Endothelial cell of umbilical vein (primary cell): ENCODE measurements at regions of chr13 and their contacts with region 1.

Region 1: GRCh38 chr13:34430294-34430693 is 511.8 kb upstream of the NBEA start:
- DNase-seq: no peak
- H3K4me3 ChIP-seq: no peak overlapping the region
- H3K27ac ChIP-seq: no peak overlapping the region
- H3K4me1 ChIP-seq: no peaks in the 10 kb centered on the region
- H3K27me3 ChIP-seq: no peaks in the 10 kb centered on the region
- CTCF ChIP-seq: no peak
- POLR2A ChIP-seq: no peak

Region 2: DNA sequence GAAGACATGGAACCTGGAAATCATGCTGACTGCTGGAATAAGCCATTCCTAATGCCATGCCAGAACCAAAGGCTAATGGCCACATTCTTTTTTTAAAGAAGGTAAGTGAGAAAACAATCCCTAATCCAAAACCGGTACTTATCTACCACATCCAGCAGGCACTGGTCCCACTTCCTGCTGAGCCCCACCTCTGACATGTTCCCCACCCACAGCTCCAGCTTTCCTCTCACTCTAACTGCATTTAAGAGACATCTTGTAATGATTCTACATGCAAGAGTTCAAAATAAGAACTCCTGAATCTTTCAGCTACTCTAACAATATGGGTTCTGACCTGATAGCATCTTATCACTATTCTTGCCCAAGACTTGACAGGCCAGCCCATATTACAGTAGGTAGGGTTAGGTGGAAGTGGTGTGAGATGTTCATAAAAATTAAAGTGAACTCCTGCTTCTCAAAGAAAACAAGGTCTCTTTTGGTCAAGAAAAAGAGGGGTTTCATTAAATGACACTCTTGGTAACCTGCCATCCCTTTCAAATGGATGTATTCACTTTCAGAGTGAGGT is 1933.6 kb before region 1 on chr13:
- CTCF ChIA-PET with region 1: no interaction called
- POLR2A ChIA-PET with region 1: no interaction called
- dilution Hi-C with region 1: no loop called
- intact Hi-C with region 1: no loop called
- DNase-seq: no peak
- H3K4me3 ChIP-seq: no peak overlapping the region
- H3K27ac ChIP-seq: no peak overlapping the region
- H3K4me1 ChIP-seq: no peaks in the 10 kb centered on the region
- H3K27me3 ChIP-seq: no peaks in the 10 kb centered on the region
- CTCF ChIP-seq: no peak
- POLR2A ChIP-seq: no peak

Region 3: GRCh38 chr13:34671137-34671536 is 240.8 kb after region 1 on chr13:
- CTCF ChIA-PET with region 1: no interaction called
- POLR2A ChIA-PET with region 1: interaction called, 16 read pairs
- dilution Hi-C with region 1: no loop called
- intact Hi-C with region 1: no loop called
- DNase-seq: no peak
- H3K4me3 ChIP-seq: no peak overlapping the region
- H3K27ac ChIP-seq: no peak overlapping the region
- H3K4me1 ChIP-seq: no peaks in the 10 kb centered on the region
- H3K27me3 ChIP-seq: peaks cover 0 to 3% of the 10 kb centered on the region in 2 experiments
- CTCF ChIP-seq: no peak
- POLR2A ChIP-seq: no peak